ENCODE measurements at regions of chr19 and their contacts with region 1.

Region 1: GRCh38 chr19:2543463-2544442 is 67.8 kb downstream of the GADD45B start:
- DNase-seq: peak; percentile 97 to 98
- ATAC-seq: peak; percentile 91
- H3K4me3 ChIP-seq: no peak overlapping the region
- H3K27ac ChIP-seq: peak overlapping the region; percentile 62 to 94
- H3K4me1 ChIP-seq: no peaks in the 10 kb centered on the region
- H3K27me3 ChIP-seq: no peaks in the 10 kb centered on the region

Region 2: DNA sequence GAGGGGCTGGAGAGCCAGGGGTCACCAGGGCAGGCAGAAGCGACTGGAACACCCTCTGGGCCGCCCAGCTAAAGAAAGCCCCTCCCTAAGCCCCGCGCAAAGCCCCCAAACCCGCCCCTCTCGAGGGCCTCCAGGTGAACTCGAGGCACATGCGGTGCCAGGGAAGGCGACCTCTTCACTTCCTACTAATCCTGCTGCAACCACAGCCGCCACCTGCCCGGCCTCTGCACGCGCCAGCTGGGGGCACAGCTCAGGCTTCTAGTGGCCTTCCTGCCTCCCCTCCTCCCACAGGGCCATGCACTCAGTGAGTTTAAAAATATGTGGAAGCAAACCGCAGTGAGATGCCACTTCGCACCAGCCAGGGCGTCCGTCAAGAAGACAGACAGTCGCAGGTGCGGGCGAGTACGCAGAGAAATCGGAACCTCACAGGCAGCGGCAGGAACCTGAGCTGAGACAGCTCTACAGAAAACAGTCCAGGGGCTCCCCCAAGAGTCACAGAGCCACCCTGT is 97.4 kb before region 1 on chr19:
- intact Hi-C with region 1: no loop called
- DNase-seq: peak in 1 of 2 donors; percentile 38
- ATAC-seq: no peak
- H3K4me3 ChIP-seq: no peak overlapping the region
- H3K27ac ChIP-seq: no peak overlapping the region
- H3K4me1 ChIP-seq: no peaks in the 10 kb centered on the region
- H3K27me3 ChIP-seq: no peaks in the 10 kb centered on the region

Region 3: GRCh38 chr19:2475702-2476450 is 67.9 kb before region 1 on chr19 and contains the start of gene GADD45B:
- intact Hi-C with region 1: loop called (anchors 2 kb)
- DNase-seq: peak; percentile 99
- ATAC-seq: peak; percentile 92
- H3K4me3 ChIP-seq: peak within 1 kb of the TSS; percentile 44 to 87
- H3K27ac ChIP-seq: peak within 1 kb of the TSS; percentile 62 to 95
- H3K4me1 ChIP-seq: no peaks in the 10 kb centered on the region
- H3K27me3 ChIP-seq: no peaks in the 10 kb centered on the region
- total RNA-seq, gene GADD45B: 99.5 to 185 TPM

Region 4: GRCh38 chr19:2494444-2495129 is 49.2 kb before region 1 on chr19:
- intact Hi-C with region 1: loop called in 1 of 2 experiments (anchors 5 kb)
- DNase-seq: peak; percentile 92 to 96
- ATAC-seq: peak; percentile 88
- H3K4me3 ChIP-seq: peak overlapping the region; percentile 7 to 37
- H3K27ac ChIP-seq: peak overlapping the region in 1 of 2 donors; percentile 51
- H3K4me1 ChIP-seq: no peaks in the 10 kb centered on the region
- H3K27me3 ChIP-seq: no peaks in the 10 kb centered on the region

Measured in aorta (tissue), 5 donors.